ENCODE measurements at regions of chr2 and their contacts with region 1.

Region 1: DNA sequence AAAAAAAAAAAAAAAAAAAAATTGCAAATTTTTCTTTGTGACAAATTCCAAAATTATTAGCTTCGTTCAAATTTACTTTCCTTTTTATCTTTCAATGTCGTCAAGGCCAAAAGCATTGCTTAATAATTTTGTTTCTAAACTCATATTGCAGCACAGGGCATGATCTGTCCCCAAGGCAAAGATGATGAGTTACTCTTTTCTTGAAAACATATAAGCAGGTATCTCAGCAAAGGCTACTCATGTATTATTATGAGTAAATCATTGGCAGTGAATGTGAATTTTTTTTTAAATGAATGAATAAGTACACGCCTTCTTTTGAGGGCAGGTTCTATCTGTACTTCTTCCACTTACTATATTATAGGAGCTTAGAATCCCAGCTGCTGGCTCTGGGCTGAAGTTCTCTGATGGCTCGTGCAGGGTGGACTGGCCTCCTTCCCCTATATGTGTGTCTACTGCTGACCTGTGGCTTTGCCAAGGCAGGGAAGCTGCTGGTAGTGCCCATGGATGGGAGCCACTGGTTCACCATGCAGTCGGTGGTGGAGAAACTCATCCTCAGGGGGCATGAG is at the start of gene UGT1A7:
- DNase-seq: no peak
- ATAC-seq: no peak
- H3K4me3 ChIP-seq: no peak within 1 kb of the TSS
- H3K27ac ChIP-seq: no peak within 1 kb of the TSS
- H3K4me1 ChIP-seq: no peaks in the 10 kb centered on the region
- H3K27me3 ChIP-seq: peaks cover 2% of the 10 kb centered on the region
- CTCF ChIP-seq: no peak
- POLR2A ChIP-seq: no peak
- RAD21 ChIP-seq: no peak
- total RNA-seq, gene UGT1A7: not detected in 2 replicates

Region 2: GRCh38 chr2:233700028-233700635 is 18.5 kb after region 1 on chr2:
- CTCF ChIA-PET with region 1: no interaction called
- POLR2A ChIA-PET with region 1: no interaction called
- dilution Hi-C with region 1: no loop called
- in situ Hi-C with region 1: no loop called
- intact Hi-C with region 1: loop called (anchors 1 kb)
- DNase-seq: peak; percentile 69
- ATAC-seq: peak; percentile 68
- H3K4me3 ChIP-seq: no peak overlapping the region
- H3K27ac ChIP-seq: peak overlapping the region; percentile 99; the same call in 1 of the 2 replicates
- H3K4me1 ChIP-seq: peaks cover 4% of the 10 kb centered on the region
- H3K27me3 ChIP-seq: no peaks in the 10 kb centered on the region
- CTCF ChIP-seq: no peak
- POLR2A ChIP-seq: no peak
- RAD21 ChIP-seq: no peak